ENCODE measurements at regions of chr6 and their contacts with region 1.

Region 1: DNA sequence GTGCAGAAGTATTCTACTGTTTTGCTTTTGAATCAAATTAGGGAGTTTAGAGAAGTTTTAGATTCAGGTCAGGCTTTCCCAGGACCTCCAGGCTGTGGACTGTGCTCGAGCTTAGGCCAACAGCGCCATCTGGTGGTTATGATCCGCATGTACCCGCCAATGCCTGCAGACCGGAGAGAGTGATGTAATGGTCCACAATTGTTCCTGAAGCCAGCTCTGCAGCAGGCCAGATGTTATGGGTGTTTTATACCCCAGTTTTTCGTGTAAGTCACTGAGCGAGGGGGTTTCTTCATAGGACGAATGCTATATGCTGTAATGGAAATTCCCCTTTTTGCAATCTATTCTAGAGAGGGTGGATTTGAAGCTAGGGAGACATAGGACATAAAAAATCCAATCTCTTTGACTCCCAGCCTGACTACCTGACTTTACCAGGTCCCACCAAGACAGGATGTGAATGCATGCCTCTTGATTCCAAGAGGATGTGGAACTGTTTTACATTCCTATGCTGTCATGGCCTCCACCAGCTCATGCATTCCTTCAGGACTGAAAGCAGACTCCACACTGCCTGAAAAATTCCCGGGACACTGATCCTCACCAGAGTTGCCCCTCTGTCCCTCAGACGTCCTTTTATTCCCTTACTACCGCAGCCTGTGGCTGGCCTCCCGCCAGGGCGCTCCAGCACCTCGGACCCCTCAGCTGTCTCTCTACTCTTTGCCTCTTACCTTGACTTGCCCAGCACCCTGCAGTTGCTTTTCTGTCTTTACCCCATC is 41.2 kb upstream of the LY86 start:
- DNase-seq: peak; percentile 91
- H3K4me3 Mint-ChIP-seq: peak overlapping the region; percentile 64
- H3K27ac Mint-ChIP-seq: no peak overlapping the region
- H3K4me1 Mint-ChIP-seq: peaks cover 6% of the 10 kb centered on the region
- H3K27me3 Mint-ChIP-seq: peaks cover 32% of the 10 kb centered on the region

Region 2: GRCh38 chr6:5143634-5144311 is 1403.5 kb before region 1 on chr6:
- CTCF ChIA-PET with region 1: no interaction called
- intact Hi-C with region 1: loop called (anchors 5 kb)
- DNase-seq: peak; percentile 92
- H3K4me3 Mint-ChIP-seq: no peak overlapping the region
- H3K27ac Mint-ChIP-seq: no peak overlapping the region
- H3K4me1 Mint-ChIP-seq: no peaks in the 10 kb centered on the region
- H3K27me3 Mint-ChIP-seq: no peaks in the 10 kb centered on the region

Region 3: GRCh38 chr6:5950361-5950785 is 596.9 kb before region 1 on chr6:
- CTCF ChIA-PET with region 1: no interaction called
- intact Hi-C with region 1: loop called (anchors 5 kb)
- DNase-seq: peak; percentile 25
- H3K4me3 Mint-ChIP-seq: no peak overlapping the region
- H3K27ac Mint-ChIP-seq: no peak overlapping the region
- H3K4me1 Mint-ChIP-seq: no peaks in the 10 kb centered on the region
- H3K27me3 Mint-ChIP-seq: no peaks in the 10 kb centered on the region

Region 4: DNA sequence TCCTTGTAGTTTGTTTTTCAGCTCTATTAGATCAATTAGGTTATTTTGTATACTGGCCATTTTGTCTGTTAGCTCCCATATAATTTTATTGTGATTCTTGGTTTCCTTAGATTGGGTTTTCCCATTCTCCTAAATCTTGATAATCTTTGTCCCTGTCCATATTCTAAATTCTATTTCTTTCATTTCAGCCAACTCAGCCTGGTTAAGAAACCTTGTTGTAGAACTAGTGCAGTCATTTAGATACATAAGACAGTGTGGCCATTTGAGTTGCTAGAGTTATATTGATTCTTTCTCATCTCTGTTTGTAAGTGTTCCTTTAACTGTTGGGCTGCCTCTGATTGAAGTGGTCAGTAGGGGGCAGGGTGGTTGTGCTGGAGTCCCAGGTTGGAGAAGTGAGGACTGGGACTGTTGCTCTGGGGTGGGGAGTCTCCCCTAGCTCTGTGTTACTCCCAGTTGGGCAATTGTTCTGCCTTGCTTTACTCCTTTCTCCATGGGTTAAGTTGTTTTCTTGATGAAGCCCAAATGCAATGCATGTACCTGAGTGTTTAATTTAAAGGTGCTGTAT is 441.7 kb before region 1 on chr6:
- CTCF ChIA-PET with region 1: no interaction called
- intact Hi-C with region 1: loop called (anchors 1 kb)
- DNase-seq: peak; percentile 14
- H3K4me3 Mint-ChIP-seq: no peak overlapping the region
- H3K27ac Mint-ChIP-seq: no peak overlapping the region
- H3K4me1 Mint-ChIP-seq: no peaks in the 10 kb centered on the region
- H3K27me3 Mint-ChIP-seq: peaks cover 16% of the 10 kb centered on the region

Region 5: DNA sequence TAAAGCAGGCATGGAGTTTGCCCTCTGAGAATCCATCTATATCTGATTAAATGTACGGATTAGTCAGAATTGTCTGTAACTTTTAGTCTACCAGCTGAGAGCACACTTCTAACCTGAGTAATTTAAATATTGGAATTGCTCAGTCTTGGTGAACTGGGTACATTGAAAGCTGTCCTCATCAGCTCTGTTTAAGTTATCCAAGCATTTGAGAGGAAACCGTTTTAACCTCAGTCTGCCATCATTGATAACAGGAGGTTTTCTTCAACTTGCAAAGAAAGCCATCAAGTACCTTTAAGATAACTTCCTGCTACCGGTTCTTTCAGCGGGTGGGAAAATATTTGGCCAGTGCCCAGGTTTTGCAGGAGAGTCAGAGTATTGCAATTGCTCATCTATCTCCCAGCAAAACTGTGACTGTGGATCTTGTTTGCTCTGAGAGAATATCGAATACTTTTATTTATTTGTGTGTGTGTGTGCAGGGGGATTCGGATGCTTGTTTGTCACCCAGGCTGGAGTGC is 195.7 kb before region 1 on chr6:
- CTCF ChIA-PET with region 1: no interaction called
- intact Hi-C with region 1: loop called (anchors 10 kb)
- DNase-seq: no peak
- H3K4me3 Mint-ChIP-seq: no peak overlapping the region
- H3K27ac Mint-ChIP-seq: no peak overlapping the region
- H3K4me1 Mint-ChIP-seq: no peaks in the 10 kb centered on the region
- H3K27me3 Mint-ChIP-seq: peaks cover 19% of the 10 kb centered on the region

Region 6: DNA sequence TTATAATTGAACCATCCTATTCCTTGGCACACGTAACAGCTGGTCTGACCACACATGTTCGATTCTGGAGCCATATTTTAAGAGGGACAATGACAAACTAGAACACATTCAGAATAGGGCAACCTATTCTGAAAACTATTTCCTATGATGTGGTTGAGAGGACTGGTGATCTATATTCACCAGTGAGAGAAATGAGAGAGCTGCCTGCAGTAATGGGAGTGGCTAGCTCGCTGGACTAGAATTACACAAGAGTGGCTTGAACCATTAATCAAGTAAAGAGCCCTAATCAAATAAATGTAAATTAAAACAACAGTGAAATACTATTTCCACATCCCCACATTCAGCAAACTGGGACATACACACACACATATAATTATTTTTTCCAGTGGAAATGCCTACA is 14.1 kb before region 1 on chr6:
- CTCF ChIA-PET with region 1: interaction called, 21 read pairs
- intact Hi-C with region 1: no loop called
- DNase-seq: no peak
- H3K4me3 Mint-ChIP-seq: no peak overlapping the region
- H3K27ac Mint-ChIP-seq: no peak overlapping the region
- H3K4me1 Mint-ChIP-seq: peaks cover 3% of the 10 kb centered on the region
- H3K27me3 Mint-ChIP-seq: peaks cover 8% of the 10 kb centered on the region